MCF 10A (cell line): ENCODE measurements at regions of chr14 and their contacts with region 1.

Region 1: GRCh38 chr14:20343092-20343861 is at the start of gene PARP2:
- DNase-seq: peak; percentile 100
- H3K4me3 Mint-ChIP-seq: peak within 1 kb of the TSS; percentile 78
- H3K27ac Mint-ChIP-seq: peak within 1 kb of the TSS; percentile 92
- H3K4me1 Mint-ChIP-seq: peaks cover 7% of the 10 kb centered on the region
- H3K27me3 Mint-ChIP-seq: no peaks in the 10 kb centered on the region
- CTCF ChIP-seq: no peak
- total RNA-seq, gene PARP2: 30.4 and 33.4 TPM in 2 replicates

Region 2: GRCh38 chr14:20356422-20356821 is 13.1 kb after region 1 on chr14:
- CTCF ChIA-PET with region 1: interaction called, 4 read pairs
- POLR2A ChIA-PET with region 1: interaction called, 13 read pairs
- intact Hi-C with region 1: no loop called
- DNase-seq: peak; percentile 17
- H3K4me3 Mint-ChIP-seq: no peak overlapping the region
- H3K27ac Mint-ChIP-seq: no peak overlapping the region
- H3K4me1 Mint-ChIP-seq: no peaks in the 10 kb centered on the region
- H3K27me3 Mint-ChIP-seq: no peaks in the 10 kb centered on the region
- CTCF ChIP-seq: no peak

Region 3: GRCh38 chr14:20413045-20413799 is 69.9 kb after region 1 on chr14 and contains the start of gene TEP1:
- CTCF ChIA-PET with region 1: interaction called, 3 read pairs
- POLR2A ChIA-PET with region 1: interaction called, 22 read pairs
- intact Hi-C with region 1: loop called (anchors 5 kb)
- DNase-seq: peak; percentile 87
- H3K4me3 Mint-ChIP-seq: peak within 1 kb of the TSS; percentile 77
- H3K27ac Mint-ChIP-seq: peak within 1 kb of the TSS; percentile 49
- H3K4me1 Mint-ChIP-seq: peaks cover 7% of the 10 kb centered on the region
- H3K27me3 Mint-ChIP-seq: no peaks in the 10 kb centered on the region
- CTCF ChIP-seq: no peak
- total RNA-seq, gene TEP1: 20.4 and 22.7 TPM in 2 replicates

Region 4: DNA sequence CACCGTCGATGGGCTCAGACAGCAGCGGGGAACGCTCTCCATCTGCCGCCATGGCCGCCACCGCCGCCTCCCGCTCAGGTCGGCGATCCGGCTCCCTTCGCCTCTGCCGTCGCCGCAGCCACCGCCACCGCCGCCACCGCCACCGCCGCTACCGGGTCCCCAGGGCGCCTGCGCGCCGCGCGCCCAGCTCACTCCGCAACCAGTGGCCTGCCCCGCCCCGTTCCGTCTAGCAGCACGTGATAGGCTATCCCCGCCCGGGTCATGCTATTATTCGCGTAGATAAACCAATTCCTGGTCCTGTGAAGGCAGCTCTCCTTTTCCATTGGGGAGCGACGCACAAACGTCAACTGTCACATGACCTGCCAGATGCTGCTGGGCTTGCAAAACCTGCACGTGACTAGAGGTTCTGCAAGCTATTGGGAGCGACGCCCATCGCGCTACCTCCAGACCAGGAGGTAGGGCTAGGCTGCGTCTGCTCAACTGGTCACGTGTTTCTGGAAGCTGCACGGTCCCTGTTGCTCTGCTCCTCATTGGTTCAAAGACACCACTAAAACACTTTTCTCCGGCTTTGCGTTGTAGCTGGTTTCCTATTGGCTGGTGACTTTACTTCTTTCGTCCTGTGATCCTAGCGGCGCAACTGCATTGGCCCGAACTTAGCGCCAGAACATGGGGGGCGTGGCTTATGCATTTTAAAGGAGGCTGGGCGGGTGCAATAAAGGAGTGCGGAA is 118.2 kb after region 1 on chr14 and contains the start of gene PIP4P1:
- CTCF ChIA-PET with region 1: interaction called, 3 read pairs
- POLR2A ChIA-PET with region 1: interaction called, 50 read pairs
- intact Hi-C with region 1: no loop called
- DNase-seq: peak; percentile 100
- H3K4me3 Mint-ChIP-seq: peak within 1 kb of the TSS; percentile 76
- H3K27ac Mint-ChIP-seq: peak within 1 kb of the TSS; percentile 92
- H3K4me1 Mint-ChIP-seq: peaks cover 21% of the 10 kb centered on the region
- H3K27me3 Mint-ChIP-seq: no peaks in the 10 kb centered on the region
- CTCF ChIP-seq: no peak
- total RNA-seq, gene PIP4P1: 22.5 and 34.9 TPM in 2 replicates